ENCODE measurements at regions of chr15 and their contacts with region 1.

Region 1: GRCh38 chr15:41928637-41929620 is 35.1 kb upstream of the SPTBN5 start:
- DNase-seq: peak in 2 of 7 donors; percentile 34 to 69
- H3K4me3 ChIP-seq: no peak overlapping the region
- H3K27ac ChIP-seq: peak overlapping the region in 4 of 5 donors; percentile 6 to 32 (median 18)
- H3K4me1 ChIP-seq: peaks cover 6 to 40% of the 10 kb centered on the region in 2 donors
- H3K27me3 ChIP-seq: no peaks in the 10 kb centered on the region
- CTCF ChIP-seq: no peak
- POLR2A ChIP-seq: no peak

Region 2: GRCh38 chr15:41734079-41734478 is 194.8 kb before region 1 on chr15:
- intact Hi-C with region 1: no loop called
- DNase-seq: peak in 3 of 7 donors; percentile 8 to 30 (median 20)
- H3K4me3 ChIP-seq: no peak overlapping the region
- H3K27ac ChIP-seq: no peak overlapping the region
- H3K4me1 ChIP-seq: peaks cover 0 to 14% of the 10 kb centered on the region in 2 donors
- H3K27me3 ChIP-seq: no peaks in the 10 kb centered on the region
- CTCF ChIP-seq: no peak
- POLR2A ChIP-seq: no peak

Region 3: GRCh38 chr15:41972253-41973242 is 43.6 kb after region 1 on chr15 and contains the start of gene EHD4:
- intact Hi-C with region 1: loop called in 1 of 2 experiments (anchors 10 kb)
- DNase-seq: peak; percentile 97 to 100 (median 99)
- H3K4me3 ChIP-seq: peak within 1 kb of the TSS; percentile 29 to 86 (median 59)
- H3K27ac ChIP-seq: peak within 1 kb of the TSS in 4 of 5 donors; percentile 75 to 87 (median 79)
- H3K4me1 ChIP-seq: peaks cover 0 to 13% of the 10 kb centered on the region in 2 donors
- H3K27me3 ChIP-seq: no peaks in the 10 kb centered on the region
- CTCF ChIP-seq: peak in 5 of 6 experiments; percentile 18 to 43 (median 34)
- POLR2A ChIP-seq: peak; percentile 11 to 70
- total RNA-seq, gene EHD4: 2.0 to 17.0 (median 13.8) TPM